ENCODE measurements at regions of chr16 and their contacts with region 1.

Region 1: DNA sequence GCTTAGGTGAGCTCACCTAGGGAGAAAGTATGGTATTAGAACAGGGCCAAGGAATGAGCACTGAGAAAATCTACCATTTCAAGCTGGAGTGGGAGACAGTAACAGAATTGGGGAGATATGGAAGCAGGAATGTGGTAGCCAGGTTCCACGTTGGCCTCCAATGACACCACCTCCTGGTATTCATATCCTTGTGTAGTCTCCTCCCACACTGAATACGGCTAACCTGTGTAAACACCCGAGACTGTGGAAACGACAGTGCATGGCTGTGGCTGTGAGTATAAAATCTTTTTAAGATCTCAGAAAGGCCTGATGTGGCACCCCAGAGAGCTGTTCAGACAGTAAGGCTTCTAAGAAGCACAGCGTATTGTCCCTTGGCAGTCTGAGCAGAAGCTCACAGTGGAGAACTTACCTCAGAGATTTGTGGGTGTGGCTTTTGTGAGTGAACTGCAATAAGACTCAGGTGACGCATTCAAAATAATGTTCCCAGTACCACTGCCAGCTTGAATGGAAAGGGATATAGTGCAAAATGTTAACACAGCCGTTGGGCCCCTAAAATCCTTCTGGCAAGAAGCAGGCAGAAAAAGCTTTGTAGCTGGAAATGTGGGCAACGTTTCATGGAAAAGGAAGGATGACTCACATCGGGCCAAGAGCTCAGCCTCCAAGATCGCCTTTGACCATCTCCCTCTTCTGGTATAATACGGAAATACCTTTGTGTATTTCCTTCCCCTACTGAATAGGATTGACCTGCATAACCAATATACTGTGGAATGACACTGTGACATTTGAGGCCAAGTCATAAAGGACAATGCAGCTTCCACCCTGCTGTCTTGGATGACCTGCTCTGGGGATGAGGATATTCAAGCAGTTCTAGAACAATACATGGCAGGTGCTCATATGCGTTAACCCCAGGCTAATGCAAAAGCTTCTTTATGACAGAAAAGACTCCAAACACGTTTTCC is 14.3 kb downstream of the SDR42E1 start:
- DNase-seq: no peak
- ATAC-seq: peak; percentile 75
- H3K4me3 Mint-ChIP-seq: no peak overlapping the region
- H3K27ac Mint-ChIP-seq: no peak overlapping the region
- H3K4me1 Mint-ChIP-seq: peaks cover 27% of the 10 kb centered on the region
- H3K27me3 Mint-ChIP-seq: no peaks in the 10 kb centered on the region; the same call in 1 of the 2 replicates
- CTCF ChIP-seq: no peak

Region 2: DNA sequence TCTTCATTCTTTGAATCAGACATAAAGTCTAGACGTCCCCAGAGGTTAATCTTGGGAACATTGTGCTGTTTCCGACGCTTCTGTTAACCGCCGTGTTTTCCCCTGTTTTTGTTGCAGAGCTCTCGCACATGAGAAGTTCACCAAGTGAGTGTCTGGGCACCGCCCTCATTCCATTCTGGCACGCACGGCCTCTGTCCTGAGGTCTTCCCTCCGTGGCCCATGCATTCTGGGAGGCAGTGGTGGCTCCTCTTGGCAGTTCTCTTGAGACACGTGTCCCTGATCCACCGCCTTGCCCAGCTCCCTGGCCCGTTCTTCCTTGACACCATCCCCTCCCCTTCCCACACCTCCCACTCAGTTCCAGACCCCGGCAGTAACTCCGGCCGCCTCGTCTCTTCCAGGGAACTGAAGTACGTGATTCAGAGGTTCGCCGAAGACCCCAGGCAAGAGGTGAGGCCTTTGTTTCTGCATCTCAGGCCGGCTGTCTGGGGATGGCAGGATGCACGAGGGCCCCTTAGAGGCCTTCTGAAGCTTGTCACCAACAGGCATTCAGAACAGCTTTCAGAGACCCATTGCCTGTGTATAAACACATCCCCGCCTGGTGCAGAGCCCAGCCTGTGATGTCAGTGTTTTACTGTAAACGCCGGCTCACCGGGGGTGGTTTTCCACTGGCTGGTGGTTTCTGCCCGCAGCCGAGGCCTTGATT is 303.8 kb before region 1 on chr16:
- CTCF ChIA-PET with region 1: no interaction called
- POLR2A ChIA-PET with region 1: no interaction called
- DNase-seq: no peak
- ATAC-seq: no peak
- H3K4me3 Mint-ChIP-seq: no peak overlapping the region
- H3K27ac Mint-ChIP-seq: no peak overlapping the region; the same call in 1 of the 2 replicates
- H3K4me1 Mint-ChIP-seq: 0 out of 2 replicates have a peak, but pooled peaks cover 1% of the 10 kb centered on the region
- H3K27me3 Mint-ChIP-seq: no peaks in the 10 kb centered on the region
- CTCF ChIP-seq: no peak

Region 3: DNA sequence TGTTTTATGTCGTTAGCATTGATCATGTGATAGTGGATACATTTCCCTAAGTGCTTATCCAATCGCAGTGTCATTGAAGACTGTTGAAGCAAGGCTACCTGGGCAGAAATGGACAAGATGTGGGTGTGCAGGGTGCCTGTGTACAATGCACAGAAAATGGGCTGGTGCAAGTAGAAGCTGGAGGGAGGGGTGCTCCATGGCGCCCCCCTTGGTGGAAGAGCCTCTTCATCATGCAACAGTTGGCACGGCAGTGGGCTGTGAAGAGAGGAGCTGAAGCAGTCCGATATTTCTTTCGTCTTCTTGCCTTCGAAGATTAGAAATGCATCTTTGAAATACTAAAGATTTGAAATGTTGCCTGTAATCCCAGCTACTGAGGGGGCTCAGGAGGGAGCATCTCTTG is 117.3 kb before region 1 on chr16:
- CTCF ChIA-PET with region 1: interaction called, 12 read pairs
- POLR2A ChIA-PET with region 1: no interaction called
- DNase-seq: peak; percentile 68
- ATAC-seq: peak; percentile 74
- H3K4me3 Mint-ChIP-seq: no peak overlapping the region
- H3K27ac Mint-ChIP-seq: no peak overlapping the region
- H3K4me1 Mint-ChIP-seq: peaks cover 24% of the 10 kb centered on the region
- H3K27me3 Mint-ChIP-seq: no peaks in the 10 kb centered on the region
- CTCF ChIP-seq: peak; percentile 83

Region 4: GRCh38 chr16:81905277-81905676 is 91.7 kb before region 1 on chr16:
- CTCF ChIA-PET with region 1: interaction called, 12 read pairs
- POLR2A ChIA-PET with region 1: no interaction called
- DNase-seq: peak; percentile 31
- ATAC-seq: peak; percentile 71
- H3K4me3 Mint-ChIP-seq: no peak overlapping the region
- H3K27ac Mint-ChIP-seq: no peak overlapping the region
- H3K4me1 Mint-ChIP-seq: no peaks in the 10 kb centered on the region
- H3K27me3 Mint-ChIP-seq: no peaks in the 10 kb centered on the region
- CTCF ChIP-seq: no peak

Region 5: GRCh38 chr16:81940781-81941560 is 56.0 kb before region 1 on chr16:
- CTCF ChIA-PET with region 1: interaction called, 123 read pairs
- POLR2A ChIA-PET with region 1: interaction called, 3 read pairs
- DNase-seq: no peak
- ATAC-seq: peak; percentile 9; the same call in 1 of the 2 replicates
- H3K4me3 Mint-ChIP-seq: no peak overlapping the region
- H3K27ac Mint-ChIP-seq: no peak overlapping the region
- H3K4me1 Mint-ChIP-seq: peaks cover 79% of the 10 kb centered on the region
- H3K27me3 Mint-ChIP-seq: peaks cover 20% of the 10 kb centered on the region
- CTCF ChIP-seq: peak; percentile 10; the same call in 1 of the 2 replicates

Region 6: GRCh38 chr16:81973737-81974136 is 23.2 kb before region 1 on chr16:
- CTCF ChIA-PET with region 1: interaction called, 30 read pairs
- POLR2A ChIA-PET with region 1: no interaction called
- DNase-seq: peak; percentile 26
- ATAC-seq: peak; percentile 97
- H3K4me3 Mint-ChIP-seq: no peak overlapping the region
- H3K27ac Mint-ChIP-seq: peak overlapping the region; percentile 15; the same call in 1 of the 2 replicates
- H3K4me1 Mint-ChIP-seq: peaks cover 46% of the 10 kb centered on the region
- H3K27me3 Mint-ChIP-seq: peaks cover 14% of the 10 kb centered on the region
- CTCF ChIP-seq: no peak

Region 7: GRCh38 chr16:82027629-82028064 is 30.7 kb after region 1 on chr16:
- CTCF ChIA-PET with region 1: no interaction called
- POLR2A ChIA-PET with region 1: no interaction called
- DNase-seq: no peak
- ATAC-seq: no peak
- H3K4me3 Mint-ChIP-seq: no peak overlapping the region
- H3K27ac Mint-ChIP-seq: no peak overlapping the region
- H3K4me1 Mint-ChIP-seq: no peaks in the 10 kb centered on the region
- H3K27me3 Mint-ChIP-seq: no peaks in the 10 kb centered on the region; the same call in 1 of the 2 replicates
- CTCF ChIP-seq: no peak